ENCODE measurements at regions of chr12 and their contacts with region 1.

Region 1: GRCh38 chr12:105053116-105053572 is 31.1 kb downstream of the ALDH1L2 start:
- DNase-seq: peak; percentile 79
- ATAC-seq: peak; percentile 96
- H3K4me3 ChIP-seq: no peak overlapping the region
- H3K27ac ChIP-seq: no peak overlapping the region
- H3K4me1 ChIP-seq: peaks cover 8% of the 10 kb centered on the region
- H3K27me3 ChIP-seq: no peaks in the 10 kb centered on the region
- CTCF ChIP-seq: peak; percentile 78 to 96 (median 94)
- EP300 ChIP-seq: no peak
- POLR2A ChIP-seq: no peak
- RAD21 ChIP-seq: peak; percentile 99

Region 2: DNA sequence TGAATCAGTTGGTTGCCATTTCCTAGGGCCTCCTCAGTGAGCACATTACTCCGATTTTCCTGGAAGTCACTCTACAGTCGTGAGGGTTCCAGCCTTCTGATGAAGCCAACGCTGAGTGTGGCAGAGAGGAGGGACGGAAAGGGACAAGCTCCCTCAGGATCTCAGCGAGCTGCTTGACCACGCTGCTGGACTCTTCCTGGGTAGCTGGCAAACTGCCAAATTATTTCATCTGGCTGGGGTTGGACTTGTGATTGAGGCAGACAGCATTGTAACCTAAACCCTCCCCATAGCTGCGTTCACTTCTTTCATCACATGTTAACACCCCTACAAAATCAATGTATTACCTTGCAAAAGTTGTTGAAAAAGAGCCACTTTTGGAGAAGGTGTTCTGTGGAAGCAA is 666.0 kb before region 1 on chr12:
- CTCF ChIA-PET with region 1: interaction called, 142 read pairs
- POLR2A ChIA-PET with region 1: interaction called, 4 read pairs
- RAD21 ChIA-PET with region 1: interaction called, 73 read pairs
- SMC1A ChIA-PET with region 1: interaction called, 93 read pairs
- in situ Hi-C with region 1: loop called (anchors 5 kb)
- intact Hi-C with region 1: no loop called
- DNase-seq: no peak
- ATAC-seq: no peak
- H3K4me3 ChIP-seq: no peak overlapping the region
- H3K27ac ChIP-seq: no peak overlapping the region
- H3K4me1 ChIP-seq: no peaks in the 10 kb centered on the region
- H3K27me3 ChIP-seq: no peaks in the 10 kb centered on the region
- CTCF ChIP-seq: no peak
- EP300 ChIP-seq: no peak
- POLR2A ChIP-seq: no peak
- RAD21 ChIP-seq: no peak

Region 3: DNA sequence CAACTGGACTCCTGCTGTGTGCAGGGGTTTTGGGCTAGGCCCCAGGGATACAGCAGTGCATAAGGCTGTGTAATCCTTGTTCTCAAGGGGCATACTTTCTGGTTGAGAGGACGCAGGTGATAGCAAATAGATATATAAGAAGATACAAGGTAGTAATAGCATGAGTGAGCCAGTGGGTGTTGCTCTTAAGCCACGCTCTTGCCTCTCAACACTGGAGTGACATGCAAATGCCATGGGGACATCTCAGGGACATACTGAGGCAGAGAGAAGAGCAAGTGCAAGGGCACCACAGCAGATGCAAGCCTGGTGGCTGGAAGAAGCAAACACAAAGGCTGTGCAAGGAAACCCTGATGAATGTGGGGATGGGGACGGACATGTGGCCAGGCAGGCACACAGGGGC is 373.1 kb before region 1 on chr12:
- CTCF ChIA-PET with region 1: interaction called, 11 read pairs
- POLR2A ChIA-PET with region 1: interaction called, 6 read pairs
- RAD21 ChIA-PET with region 1: interaction called, 4 read pairs
- SMC1A ChIA-PET with region 1: interaction called, 5 read pairs
- in situ Hi-C with region 1: loop called (anchors 5 kb)
- intact Hi-C with region 1: loop called (anchors 1 kb)
- DNase-seq: peak; percentile 51
- ATAC-seq: peak; percentile 72
- H3K4me3 ChIP-seq: no peak overlapping the region
- H3K27ac ChIP-seq: no peak overlapping the region
- H3K4me1 ChIP-seq: peaks cover 44% of the 10 kb centered on the region
- H3K27me3 ChIP-seq: no peaks in the 10 kb centered on the region
- CTCF ChIP-seq: peak; percentile 57 to 75 (median 69); a peak in 5 of 6 replicates
- EP300 ChIP-seq: no peak
- POLR2A ChIP-seq: no peak
- RAD21 ChIP-seq: peak; percentile 90

Region 4: DNA sequence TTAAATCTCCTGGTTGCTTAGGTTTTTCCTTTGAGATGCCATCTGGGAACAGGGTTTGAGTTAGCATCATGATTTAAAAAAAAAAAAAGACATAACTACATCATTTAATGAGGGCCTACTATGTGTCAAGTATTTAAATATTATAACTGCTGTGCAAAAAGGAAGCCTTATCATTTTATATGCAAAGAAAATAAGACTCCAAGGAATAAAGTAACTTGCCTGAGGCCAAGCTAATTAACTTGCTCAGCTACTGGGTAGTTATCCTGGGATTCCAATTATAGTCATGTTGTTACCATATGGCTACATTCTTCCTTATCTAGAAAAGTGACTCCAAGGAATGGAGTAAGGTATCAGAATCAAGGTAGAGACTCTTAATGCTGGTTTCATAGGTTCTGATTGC is 218.5 kb before region 1 on chr12:
- CTCF ChIA-PET with region 1: interaction called, 6 read pairs
- POLR2A ChIA-PET with region 1: no interaction called
- RAD21 ChIA-PET with region 1: no interaction called
- SMC1A ChIA-PET with region 1: no interaction called
- in situ Hi-C with region 1: no loop called
- intact Hi-C with region 1: loop called (anchors 5 kb)
- DNase-seq: no peak
- ATAC-seq: no peak
- H3K4me3 ChIP-seq: no peak overlapping the region
- H3K27ac ChIP-seq: no peak overlapping the region
- H3K4me1 ChIP-seq: no peaks in the 10 kb centered on the region
- H3K27me3 ChIP-seq: no peaks in the 10 kb centered on the region
- CTCF ChIP-seq: no peak
- EP300 ChIP-seq: no peak
- POLR2A ChIP-seq: no peak
- RAD21 ChIP-seq: no peak

Region 5: GRCh38 chr12:104986022-104986941 is 66.9 kb before region 1 on chr12 and contains the start of gene NOPCHAP1:
- CTCF ChIA-PET with region 1: interaction called, 5 read pairs
- POLR2A ChIA-PET with region 1: no interaction called
- RAD21 ChIA-PET with region 1: no interaction called
- SMC1A ChIA-PET with region 1: interaction called, 4 read pairs
- in situ Hi-C with region 1: no loop called
- intact Hi-C with region 1: loop called (anchors 5 kb)
- DNase-seq: peak; percentile 46
- ATAC-seq: peak; percentile 98
- H3K4me3 ChIP-seq: peak within 1 kb of the TSS; percentile 76
- H3K27ac ChIP-seq: peak within 1 kb of the TSS; percentile 69
- H3K4me1 ChIP-seq: peaks cover 5% of the 10 kb centered on the region; the same call in 1 of the 2 replicates
- H3K27me3 ChIP-seq: no peaks in the 10 kb centered on the region
- CTCF ChIP-seq: no peak
- EP300 ChIP-seq: no peak
- POLR2A ChIP-seq: peak; percentile 93
- RAD21 ChIP-seq: 0 out of 2 replicates have a peak, but pooled peaks have one; percentile 6
- polyA plus RNA-seq, gene NOPCHAP1: 108 to 115 TPM

Region 6: DNA sequence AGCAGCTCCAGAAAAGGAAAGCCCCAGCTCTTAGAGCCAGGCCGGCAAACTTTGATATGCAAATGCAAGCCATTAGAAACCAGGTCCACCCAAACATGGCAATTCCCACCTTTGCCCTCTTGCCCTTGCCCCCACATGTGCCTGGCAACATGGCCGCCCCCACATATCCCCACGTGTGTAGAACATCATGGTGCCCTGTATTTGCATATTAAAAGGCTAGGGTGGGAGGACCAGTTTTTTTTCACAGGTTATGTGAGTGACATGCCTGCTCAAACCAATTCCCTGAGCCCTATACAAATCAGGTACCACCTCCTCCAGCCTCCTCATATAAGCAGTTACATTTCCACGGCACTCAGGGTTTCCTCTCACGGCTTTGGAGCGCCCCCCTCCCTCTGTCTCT is 37.2 kb after region 1 on chr12:
- CTCF ChIA-PET with region 1: no interaction called
- POLR2A ChIA-PET with region 1: no interaction called
- RAD21 ChIA-PET with region 1: no interaction called
- SMC1A ChIA-PET with region 1: no interaction called
- in situ Hi-C with region 1: no loop called
- intact Hi-C with region 1: no loop called
- DNase-seq: no peak
- ATAC-seq: no peak; the same call in 2 of the 3 replicates
- H3K4me3 ChIP-seq: no peak overlapping the region
- H3K27ac ChIP-seq: no peak overlapping the region
- H3K4me1 ChIP-seq: no peaks in the 10 kb centered on the region
- H3K27me3 ChIP-seq: no peaks in the 10 kb centered on the region
- CTCF ChIP-seq: no peak
- EP300 ChIP-seq: no peak
- POLR2A ChIP-seq: no peak
- RAD21 ChIP-seq: no peak

Region 7: DNA sequence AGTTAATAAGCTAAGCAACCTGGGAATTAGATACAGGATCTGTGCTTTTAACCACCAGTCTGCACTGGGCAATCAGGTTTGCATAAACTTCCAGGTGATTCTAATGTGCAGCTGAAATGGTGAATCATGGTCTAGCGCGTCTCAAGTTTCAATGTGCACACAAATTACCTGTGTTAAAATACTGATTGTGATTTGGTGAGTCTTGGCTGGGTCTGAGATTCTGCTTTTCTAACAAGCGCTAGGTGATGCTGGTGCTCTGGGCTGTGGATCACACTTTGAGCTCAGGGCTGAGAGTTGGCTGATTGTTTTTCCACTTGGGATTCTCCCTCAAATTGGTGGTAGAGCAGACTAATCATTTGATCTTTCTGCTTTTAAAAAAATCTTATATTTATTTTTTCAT is 402.1 kb after region 1 on chr12:
- CTCF ChIA-PET with region 1: no interaction called
- POLR2A ChIA-PET with region 1: no interaction called
- RAD21 ChIA-PET with region 1: no interaction called
- SMC1A ChIA-PET with region 1: no interaction called
- in situ Hi-C with region 1: no loop called
- intact Hi-C with region 1: no loop called
- DNase-seq: no peak
- ATAC-seq: no peak
- H3K4me3 ChIP-seq: no peak overlapping the region
- H3K27ac ChIP-seq: no peak overlapping the region
- H3K4me1 ChIP-seq: no peaks in the 10 kb centered on the region
- H3K27me3 ChIP-seq: no peaks in the 10 kb centered on the region
- CTCF ChIP-seq: no peak
- EP300 ChIP-seq: no peak
- POLR2A ChIP-seq: no peak
- RAD21 ChIP-seq: no peak